ENCODE measurements at regions of chr5 and their contacts with region 1.

Region 1: GRCh38 chr5:146273109-146273508 is 65.5 kb upstream of the POU4F3 start:
- DNase-seq: no peak
- ATAC-seq: no peak

Region 2: GRCh38 chr5:145975361-145976066 is 297.6 kb before region 1 on chr5:
- intact Hi-C with region 1: no loop called
- DNase-seq: no peak
- ATAC-seq: no peak

Region 3: GRCh38 chr5:146151970-146152369 is 121.1 kb before region 1 on chr5:
- intact Hi-C with region 1: loop called (anchors 10 kb)
- DNase-seq: no peak
- ATAC-seq: no peak

Region 4: DNA sequence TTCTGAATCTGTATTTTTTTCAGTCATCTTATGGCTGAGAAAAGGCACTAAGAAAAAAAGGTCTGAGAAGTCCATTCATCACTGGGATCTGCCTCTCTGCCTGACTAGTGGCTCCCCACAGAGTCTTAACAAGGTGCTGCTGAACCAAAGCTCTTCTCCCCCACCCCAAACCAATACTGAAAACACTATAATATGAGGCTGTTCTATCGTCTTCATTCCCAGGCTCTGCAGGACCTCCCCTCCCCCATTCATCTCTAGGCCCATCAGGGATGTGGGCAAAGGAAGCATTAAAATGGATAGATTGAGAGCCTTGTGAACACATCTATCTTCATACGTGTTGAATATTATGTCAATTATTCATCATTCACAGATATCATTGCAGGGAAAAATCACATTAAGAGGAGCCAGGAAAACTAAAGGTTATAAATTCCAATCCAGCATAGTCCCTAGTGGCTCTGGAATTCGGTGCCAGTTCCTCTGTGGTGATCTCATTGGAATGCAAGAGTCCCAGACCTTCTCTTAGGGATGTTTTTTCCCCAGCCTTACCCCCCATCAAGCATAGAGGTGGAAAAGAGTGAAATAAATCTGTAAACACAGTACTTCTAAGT is 287.2 kb after region 1 on chr5:
- intact Hi-C with region 1: no loop called
- DNase-seq: no peak
- ATAC-seq: no peak

Measured in Right ventricle myocardium superior (tissue), 1 donor.